Spleen (tissue), 13 donors: ENCODE measurements at regions of chr2 and their contacts with region 1.

Region 1: DNA sequence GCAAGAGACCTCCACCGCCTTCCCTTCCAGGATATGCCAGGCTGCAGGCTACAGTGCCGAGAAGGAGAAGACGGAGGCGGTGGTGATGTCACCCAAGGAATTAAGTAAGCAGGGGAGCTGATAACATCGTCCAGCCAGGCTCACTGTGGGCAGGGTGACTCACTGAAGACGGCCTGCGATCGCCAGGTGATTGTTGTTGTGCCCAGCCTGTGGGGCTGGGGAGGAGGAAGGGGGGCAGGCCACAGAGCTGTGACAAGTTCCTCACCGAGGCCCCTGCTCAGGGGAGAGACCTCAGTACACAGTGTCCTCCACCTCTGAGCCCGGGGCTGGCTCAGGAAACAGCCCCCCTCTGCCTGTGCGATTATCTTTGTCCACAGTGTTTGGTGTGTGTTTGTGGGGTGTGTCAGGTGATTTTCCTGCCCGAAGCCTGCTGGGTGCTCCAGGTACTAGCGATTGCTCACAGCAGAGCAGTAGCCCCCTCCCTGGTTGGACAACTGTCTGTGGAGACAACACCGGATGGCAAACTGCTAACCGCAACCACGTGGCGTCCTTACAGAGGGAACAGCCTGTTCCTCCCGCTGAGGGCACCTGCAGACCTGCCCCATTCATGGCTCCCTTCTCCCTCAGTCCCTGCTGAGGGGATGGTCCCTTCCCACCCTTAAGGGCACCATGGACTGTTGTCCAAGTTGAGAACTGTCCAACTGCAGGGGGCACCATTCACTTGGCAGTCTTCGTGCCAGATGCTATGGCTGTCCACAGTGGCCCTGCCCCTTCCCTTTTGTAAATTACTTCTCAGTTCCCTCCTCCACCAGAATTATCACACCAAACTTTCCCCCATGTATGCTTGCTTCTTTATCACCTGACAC is 95.1 kb downstream of the ZFP36L2 start:
- DNase-seq: peak; percentile 99
- H3K4me3 ChIP-seq: peak overlapping the region in 3 of 8 donors; percentile 2 to 49 (median 8)
- H3K27ac ChIP-seq: peak overlapping the region; percentile 85 to 99 (median 94)
- H3K4me1 ChIP-seq: peaks cover 78 to 100% (median 93%) of the 10 kb centered on the region in 6 donors
- H3K27me3 ChIP-seq: no peaks in the 10 kb centered on the region
- CTCF ChIP-seq: peak in 10 of 11 experiments; percentile 58 to 91 (median 81)
- POLR2A ChIP-seq: peak in 1 of 3 donors; percentile 10

Region 2: GRCh38 chr2:43219383-43220228 is 88.3 kb after region 1 on chr2:
- intact Hi-C with region 1: loop called (anchors 5 kb)
- DNase-seq: peak; percentile 97
- H3K4me3 ChIP-seq: peak overlapping the region; percentile 26 to 99 (median 90)
- H3K27ac ChIP-seq: peak overlapping the region; percentile 93 to 100 (median 99)
- H3K4me1 ChIP-seq: peaks cover 30 to 88% (median 66%) of the 10 kb centered on the region in 6 donors
- H3K27me3 ChIP-seq: no peaks in the 10 kb centered on the region
- CTCF ChIP-seq: peak in 2 of 11 experiments; percentile 4 to 14
- POLR2A ChIP-seq: peak in 2 of 3 donors; percentile 61 to 89

Region 3: GRCh38 chr2:43276962-43277391 is 145.7 kb after region 1 on chr2:
- intact Hi-C with region 1: no loop called
- DNase-seq: no peak
- H3K4me3 ChIP-seq: no peak overlapping the region
- H3K27ac ChIP-seq: peak overlapping the region; percentile 57 to 83 (median 72)
- H3K4me1 ChIP-seq: peaks cover 16 to 50% (median 30%) of the 10 kb centered on the region in 6 donors
- H3K27me3 ChIP-seq: no peaks in the 10 kb centered on the region
- CTCF ChIP-seq: no peak
- POLR2A ChIP-seq: no peak